ENCODE measurements at regions of chr2 and their contacts with region 1.

Region 1: GRCh38 chr2:130385709-130386108 is 29.9 kb downstream of the PTPN18 start:
- DNase-seq: no peak
- ATAC-seq: peak in 2 of 8 donors; percentile 6 to 17
- H3K4me3 ChIP-seq: no peak overlapping the region
- H3K27ac ChIP-seq: peak overlapping the region in 6 of 10 donors; percentile 39 to 94 (median 73)
- H3K4me1 ChIP-seq: peaks cover 8 to 59% (median 41%) of the 10 kb centered on the region in 9 donors
- H3K27me3 ChIP-seq: no peaks in the 10 kb centered on the region
- CTCF ChIP-seq: no peak

Region 2: GRCh38 chr2:129876541-129876940 is 509.2 kb before region 1 on chr2:
- intact Hi-C with region 1: no loop called
- DNase-seq: no peak
- ATAC-seq: peak in 1 of 8 donors; percentile 18
- H3K4me3 ChIP-seq: peak overlapping the region in 9 of 10 donors; percentile 57 to 84 (median 70)
- H3K27ac ChIP-seq: peak overlapping the region in 6 of 10 donors; percentile 63 to 87 (median 69)
- H3K4me1 ChIP-seq: peaks cover 2 to 16% (median 12%) of the 10 kb centered on the region in 9 donors
- H3K27me3 ChIP-seq: no peaks in the 10 kb centered on the region
- CTCF ChIP-seq: no peak

Region 3: GRCh38 chr2:129915303-129915840 is 470.3 kb before region 1 on chr2:
- intact Hi-C with region 1: no loop called
- DNase-seq: no peak
- ATAC-seq: no peak
- H3K4me3 ChIP-seq: no peak overlapping the region
- H3K27ac ChIP-seq: no peak overlapping the region
- H3K4me1 ChIP-seq: no peaks in the 10 kb centered on the region
- H3K27me3 ChIP-seq: peaks cover 0 to 5% (median 0%) of the 10 kb centered on the region in 7 donors
- CTCF ChIP-seq: no peak

Region 4: DNA sequence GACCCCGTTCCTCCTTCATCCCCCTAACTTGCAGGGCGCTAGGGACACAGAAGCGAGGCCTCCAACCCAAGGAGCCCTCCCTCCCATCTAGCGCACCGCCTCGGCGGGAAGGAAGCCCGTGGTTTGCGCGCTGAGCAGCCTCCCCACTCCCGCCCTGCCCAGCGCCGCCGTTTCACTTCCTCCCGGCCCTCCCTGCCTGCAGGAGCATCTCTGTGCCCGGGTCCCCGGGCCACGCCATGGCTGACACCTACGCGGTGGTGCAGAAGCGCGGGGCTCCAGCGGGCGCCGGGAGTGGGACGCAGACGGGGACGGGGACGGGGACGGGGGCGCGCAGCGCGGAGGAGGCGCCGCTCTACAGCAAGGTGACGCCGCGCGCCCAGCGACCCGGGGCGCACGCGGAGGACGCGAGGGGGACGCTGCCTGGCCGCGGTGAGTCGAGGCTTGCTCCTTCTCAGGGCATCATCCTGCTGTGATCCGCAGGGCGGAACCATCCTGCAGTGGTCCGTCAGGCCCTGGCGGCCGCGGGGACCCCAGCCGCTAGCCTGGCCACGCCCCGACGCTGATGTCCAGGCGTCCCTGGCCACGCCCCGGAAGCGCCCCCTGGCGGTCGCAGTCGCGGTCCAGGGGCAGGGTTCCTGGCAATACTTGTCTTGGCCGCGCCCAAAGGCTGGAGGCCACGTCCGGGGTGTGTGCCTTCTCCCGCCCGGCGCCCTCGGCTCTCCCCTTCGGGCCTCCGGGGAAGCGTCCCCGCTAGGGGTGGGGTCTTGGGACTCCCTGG is 13.5 kb before region 1 on chr2:
- intact Hi-C with region 1: loop called in 1 of 10 experiments (anchors 2 kb)
- DNase-seq: peak; percentile 89 to 95
- ATAC-seq: peak; percentile 92 to 97 (median 96)
- H3K4me3 ChIP-seq: peak overlapping the region; percentile 74 to 92 (median 87)
- H3K27ac ChIP-seq: peak overlapping the region; percentile 80 to 98 (median 94)
- H3K4me1 ChIP-seq: peaks cover 3 to 67% (median 20%) of the 10 kb centered on the region in 9 donors
- H3K27me3 ChIP-seq: no peaks in the 10 kb centered on the region
- CTCF ChIP-seq: peak; percentile 89 to 97 (median 93)

Region 5: DNA sequence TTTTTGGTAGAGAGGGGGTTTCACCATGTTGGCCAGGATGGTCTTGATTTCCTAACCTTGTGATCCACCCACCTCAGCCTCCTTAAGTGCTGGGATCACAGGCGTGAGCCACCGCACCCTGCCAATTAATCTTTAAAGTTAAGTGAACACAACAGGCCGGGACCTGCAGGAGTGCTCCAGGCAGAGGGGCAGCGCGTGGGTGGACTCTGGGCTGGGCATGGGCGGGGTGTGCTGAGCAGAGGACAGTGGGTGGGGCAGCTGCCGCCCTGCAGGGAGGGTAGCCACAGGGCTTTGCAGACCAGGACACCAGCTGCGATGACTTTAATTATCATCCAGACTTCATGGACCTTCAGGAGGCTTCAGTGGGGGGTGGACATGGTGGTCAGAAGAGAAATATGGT is 334.3 kb after region 1 on chr2:
- intact Hi-C with region 1: no loop called
- DNase-seq: no peak
- ATAC-seq: no peak
- H3K4me3 ChIP-seq: no peak overlapping the region
- H3K27ac ChIP-seq: no peak overlapping the region
- H3K4me1 ChIP-seq: no peaks in the 10 kb centered on the region
- H3K27me3 ChIP-seq: peaks cover 0 to 16% (median 0%) of the 10 kb centered on the region in 7 donors
- CTCF ChIP-seq: no peak

Region 6: DNA sequence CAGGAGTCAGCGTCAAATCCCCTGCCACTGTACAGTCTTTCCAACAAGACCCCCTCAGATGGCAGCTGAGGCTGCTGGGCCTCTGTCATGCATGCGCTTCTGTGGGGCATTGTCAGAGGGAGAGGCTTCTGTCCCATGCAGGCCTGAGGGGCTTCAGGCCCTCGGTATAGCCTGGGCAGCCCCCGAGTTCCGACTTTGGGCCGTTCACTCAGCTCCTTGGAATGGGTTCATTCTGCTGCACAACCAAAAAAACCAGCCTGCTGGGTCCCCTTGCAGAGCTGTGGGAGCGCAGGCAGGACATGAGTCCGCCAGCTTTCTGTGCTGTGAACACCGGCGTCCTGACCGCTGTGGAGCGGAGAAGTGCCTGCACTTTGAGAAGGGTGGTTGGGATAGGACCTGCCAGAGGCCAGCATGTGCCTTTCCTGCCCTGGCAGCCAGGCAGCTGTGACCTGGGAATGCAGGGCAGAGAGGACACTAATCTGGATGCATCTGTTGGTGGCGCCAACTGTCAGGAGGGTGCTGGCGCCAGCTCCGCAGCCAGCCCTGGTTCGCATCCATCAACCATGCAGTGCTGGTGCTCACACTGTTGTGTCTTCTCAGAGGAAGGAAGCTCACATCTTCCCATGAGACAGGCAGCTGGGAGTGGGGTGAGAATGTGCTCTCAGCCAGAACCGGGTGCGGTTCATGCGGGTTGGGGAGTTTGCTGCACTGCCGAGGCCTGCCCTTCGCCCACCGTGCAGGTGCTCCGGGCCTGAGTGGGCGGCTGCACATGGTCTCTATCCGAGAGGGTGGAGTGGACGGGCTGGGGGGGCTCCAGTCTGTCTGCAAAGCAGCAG is 465.3 kb after region 1 on chr2:
- intact Hi-C with region 1: no loop called
- DNase-seq: peak in 1 of 2 donors; percentile 33
- ATAC-seq: peak in 2 of 8 donors; percentile 65 to 81
- H3K4me3 ChIP-seq: no peak overlapping the region
- H3K27ac ChIP-seq: peak overlapping the region in 1 of 10 donors; percentile 10
- H3K4me1 ChIP-seq: peaks cover 0 to 5% (median 0%) of the 10 kb centered on the region in 9 donors
- H3K27me3 ChIP-seq: peaks cover 0 to 6% (median 0%) of the 10 kb centered on the region in 7 donors
- CTCF ChIP-seq: no peak

Measured in heart right ventricle (tissue), 16 donors.